Activated T-helper 2 cell treated with anti-CD3 and anti-CD28 coated beads, Interferon-gamma antibody, Interleukin-2, Interleukin-4, amounts not matched to agents 10 μg/mL and 5 μg/mL and 100 μg/mL, durations not matched to agents 14 hours and 24 hours and 36 hours (primary cell): ENCODE measurements at regions of chr1 and their contacts with region 1.

Region 1: DNA sequence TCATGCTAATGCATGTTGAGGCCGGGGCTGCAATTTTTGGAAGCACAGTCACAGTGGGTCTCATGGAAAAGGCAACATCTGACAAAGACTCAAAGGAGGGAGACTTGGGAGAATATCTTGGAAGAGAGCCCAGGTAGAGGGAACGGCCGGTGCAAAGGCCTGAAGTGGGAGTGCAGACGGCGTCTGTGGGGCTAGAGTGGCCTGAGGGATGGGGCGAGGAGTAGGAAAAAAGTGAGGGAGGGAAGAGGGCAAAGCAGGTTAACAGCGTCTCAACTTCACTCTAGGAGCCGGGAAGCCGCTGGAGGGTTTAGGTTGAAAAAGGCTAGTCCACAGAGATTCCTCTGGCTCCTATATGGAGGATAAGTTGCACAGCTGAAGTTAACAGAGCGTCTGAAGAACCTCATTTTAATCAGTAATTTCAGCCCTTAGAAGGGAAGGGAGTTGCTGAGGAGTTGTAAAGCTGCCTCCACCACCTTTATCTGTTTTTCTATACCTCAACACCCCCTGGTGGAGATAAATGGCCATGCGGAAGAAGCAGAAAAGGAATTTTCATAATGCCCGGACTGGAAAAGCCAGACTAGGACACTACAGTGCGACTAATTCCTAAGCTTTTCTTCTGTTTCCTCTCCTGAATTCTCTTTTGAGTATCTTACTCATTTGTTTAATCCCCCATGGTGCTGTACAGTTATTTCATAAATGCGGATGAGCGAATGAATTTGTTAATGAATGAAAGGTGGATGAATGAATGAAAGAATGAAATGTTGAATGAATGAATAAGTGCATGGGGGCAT is 78.7 kb upstream of the ZNF281 start:
- DNase-seq: no peak
- H3K4me3 Mint-ChIP-seq: no peak overlapping the region
- H3K27ac Mint-ChIP-seq: no peak overlapping the region
- H3K4me1 Mint-ChIP-seq: peaks cover 11% of the 10 kb centered on the region
- H3K27me3 Mint-ChIP-seq: peaks cover 37% of the 10 kb centered on the region

Region 2: GRCh38 chr1:199720496-199720895 is 768.1 kb before region 1 on chr1:
- intact Hi-C with region 1: no loop called
- DNase-seq: no peak
- H3K4me3 Mint-ChIP-seq: no peak overlapping the region
- H3K27ac Mint-ChIP-seq: no peak overlapping the region
- H3K4me1 Mint-ChIP-seq: peaks cover 4% of the 10 kb centered on the region
- H3K27me3 Mint-ChIP-seq: no peaks in the 10 kb centered on the region

Region 3: DNA sequence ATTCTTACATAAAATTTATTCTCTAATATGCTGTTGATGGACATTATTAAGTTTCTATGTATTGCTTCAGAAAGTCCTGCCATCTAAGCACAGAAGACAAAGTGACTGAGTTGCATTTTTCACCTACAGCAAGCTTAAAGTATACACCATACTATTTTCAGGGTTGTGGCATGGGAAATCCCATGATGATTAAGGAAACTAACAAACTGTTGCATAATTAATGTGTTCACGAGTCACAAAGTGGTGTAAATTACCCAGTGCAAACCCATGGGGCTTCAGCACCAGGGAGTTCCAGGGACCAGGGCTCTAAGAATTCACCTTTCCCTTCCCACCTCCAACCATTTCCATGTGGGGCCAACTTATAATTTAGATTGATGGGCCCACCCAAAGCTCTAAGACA is 543.0 kb before region 1 on chr1:
- intact Hi-C with region 1: loop called (anchors 5 kb)
- DNase-seq: no peak
- H3K4me3 Mint-ChIP-seq: no peak overlapping the region
- H3K27ac Mint-ChIP-seq: no peak overlapping the region
- H3K4me1 Mint-ChIP-seq: peaks cover 14% of the 10 kb centered on the region
- H3K27me3 Mint-ChIP-seq: peaks cover 47% of the 10 kb centered on the region

Region 4: GRCh38 chr1:200150720-200151119 is 337.9 kb before region 1 on chr1:
- intact Hi-C with region 1: loop called (anchors 1 kb)
- DNase-seq: no peak
- H3K4me3 Mint-ChIP-seq: no peak overlapping the region
- H3K27ac Mint-ChIP-seq: peak overlapping the region; percentile 73
- H3K4me1 Mint-ChIP-seq: peaks cover 47% of the 10 kb centered on the region
- H3K27me3 Mint-ChIP-seq: no peaks in the 10 kb centered on the region

Region 5: GRCh38 chr1:200302192-200302920 is 186.2 kb before region 1 on chr1:
- intact Hi-C with region 1: loop called (anchors 2 kb)
- DNase-seq: peak; percentile 52
- H3K4me3 Mint-ChIP-seq: peak overlapping the region; percentile 77
- H3K27ac Mint-ChIP-seq: no peak overlapping the region
- H3K4me1 Mint-ChIP-seq: peaks cover 23% of the 10 kb centered on the region
- H3K27me3 Mint-ChIP-seq: peaks cover 54% of the 10 kb centered on the region

Region 6: DNA sequence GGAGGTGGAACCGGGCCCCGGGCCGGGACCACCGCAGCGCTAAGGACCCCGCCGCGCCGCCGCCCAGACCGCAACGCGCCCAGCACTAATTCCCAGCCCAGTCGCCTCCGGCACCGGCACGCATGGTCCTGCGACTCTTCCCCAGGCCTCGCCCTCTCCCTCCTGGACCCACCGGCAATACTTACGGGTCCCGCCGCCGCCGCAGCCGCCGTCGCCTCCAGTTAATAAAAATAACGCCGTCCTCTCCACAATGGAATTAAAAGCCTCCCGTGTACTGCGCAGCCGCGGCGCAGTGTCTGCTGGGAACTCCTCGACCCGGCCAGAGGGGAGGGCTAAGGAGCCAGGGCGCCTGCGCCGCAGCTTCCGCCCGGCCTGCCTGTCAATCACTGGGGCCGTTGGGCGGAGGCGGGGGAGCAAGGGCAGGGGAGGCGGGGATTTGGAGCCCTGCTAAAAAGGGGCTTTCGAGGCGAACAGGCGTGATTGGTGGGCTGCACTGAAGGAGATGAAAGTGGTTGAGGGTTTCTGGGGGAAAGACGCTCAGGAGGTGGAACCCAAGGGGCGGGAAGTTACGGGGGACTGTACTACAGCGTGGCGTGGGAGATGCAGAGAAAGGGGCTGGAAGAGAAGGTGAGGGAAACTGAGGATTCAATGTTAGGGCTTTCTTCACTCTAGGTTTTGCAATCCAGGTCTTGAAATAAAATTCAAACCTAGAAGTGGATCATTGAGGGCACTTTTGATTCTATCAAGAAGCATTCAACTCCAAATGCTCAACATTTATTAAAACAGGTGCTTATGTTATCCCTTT is 78.6 kb before region 1 on chr1 and contains the start of gene ZNF281:
- intact Hi-C with region 1: loop called (anchors 2 kb)
- DNase-seq: peak; percentile 92
- H3K4me3 Mint-ChIP-seq: peak within 1 kb of the TSS; percentile 91
- H3K27ac Mint-ChIP-seq: peak within 1 kb of the TSS; percentile 85
- H3K4me1 Mint-ChIP-seq: peaks cover 53% of the 10 kb centered on the region
- H3K27me3 Mint-ChIP-seq: peaks cover 13% of the 10 kb centered on the region
- total RNA-seq, gene ZNF281: 18.9 and 19.0 TPM in 2 replicates

Region 7: GRCh38 chr1:200473698-200474371 is 14.7 kb before region 1 on chr1:
- intact Hi-C with region 1: loop called (anchors 1 kb)
- DNase-seq: no peak
- H3K4me3 Mint-ChIP-seq: no peak overlapping the region
- H3K27ac Mint-ChIP-seq: peak overlapping the region; percentile 62
- H3K4me1 Mint-ChIP-seq: peaks cover 26% of the 10 kb centered on the region
- H3K27me3 Mint-ChIP-seq: peaks cover 33% of the 10 kb centered on the region